ENCODE measurements at regions of chr1 and their contacts with region 1.

Region 1: GRCh38 chr1:31065310-31066217 is at the start of gene PUM1:
- DNase-seq: peak; percentile 99
- ATAC-seq: peak; percentile 96
- H3K4me3 Mint-ChIP-seq: peak within 1 kb of the TSS; percentile 98
- H3K27ac Mint-ChIP-seq: peak within 1 kb of the TSS; percentile 99
- H3K4me1 Mint-ChIP-seq: peaks cover 24% of the 10 kb centered on the region
- H3K27me3 Mint-ChIP-seq: no peaks in the 10 kb centered on the region
- total RNA-seq, gene PUM1: 91.0 to 94.9 TPM

Region 2: DNA sequence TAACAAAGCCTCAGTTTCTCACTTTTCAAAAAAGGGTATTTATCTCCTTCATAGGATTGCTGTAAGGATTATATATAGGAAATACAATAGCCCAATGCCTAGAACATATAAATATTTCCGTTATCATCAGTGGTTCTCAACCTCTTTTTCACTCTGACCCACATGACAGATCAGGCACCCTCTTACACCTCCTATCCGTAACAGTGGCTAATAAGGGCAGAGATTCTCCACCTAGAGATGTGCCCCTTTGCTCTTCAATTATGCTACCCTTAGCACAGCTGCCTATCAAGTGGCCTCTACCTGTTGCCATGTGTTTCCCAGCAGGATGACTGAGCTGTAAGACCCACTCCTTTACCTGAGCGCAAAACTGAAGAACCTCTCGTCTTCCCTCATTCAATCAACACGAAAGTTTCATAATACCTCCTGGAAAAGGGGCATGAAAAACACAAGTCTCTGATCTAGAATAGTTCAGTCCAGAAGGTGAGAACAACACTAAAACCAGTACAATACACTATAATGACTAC is 10.5 kb before region 1 on chr1:
- CTCF ChIA-PET with region 1: interaction called, 3 read pairs
- POLR2A ChIA-PET with region 1: interaction called, 15 read pairs
- DNase-seq: no peak
- ATAC-seq: no peak
- H3K4me3 Mint-ChIP-seq: no peak overlapping the region
- H3K27ac Mint-ChIP-seq: no peak overlapping the region
- H3K4me1 Mint-ChIP-seq: peaks cover 47% of the 10 kb centered on the region
- H3K27me3 Mint-ChIP-seq: no peaks in the 10 kb centered on the region

Region 3: GRCh38 chr1:31111290-31111977 is 45.9 kb after region 1 on chr1:
- CTCF ChIA-PET with region 1: no interaction called
- POLR2A ChIA-PET with region 1: no interaction called
- DNase-seq: no peak
- ATAC-seq: no peak
- H3K4me3 Mint-ChIP-seq: no peak overlapping the region
- H3K27ac Mint-ChIP-seq: no peak overlapping the region
- H3K4me1 Mint-ChIP-seq: no peaks in the 10 kb centered on the region
- H3K27me3 Mint-ChIP-seq: peaks cover 6% of the 10 kb centered on the region

Measured in activated CD8-positive, alpha-beta T cell treated with anti-CD3 and anti-CD28 coated beads, Interleukin-2, amount 10 ng/mL, durations not matched to agents 7 days and 5 days (primary cell).